Left cardiac atrium (tissue), 4 donors: ENCODE measurements at regions of chr1 and their contacts with region 1.

Region 1: GRCh38 chr1:67853704-67854103 is 20.4 kb upstream of the GNG12 start:
- DNase-seq: peak; percentile 57
- ATAC-seq: peak; percentile 65 to 82

Region 2: GRCh38 chr1:67766141-67766978 is 87.3 kb before region 1 on chr1:
- intact Hi-C with region 1: loop called in 1 of 2 experiments (anchors 5 kb)
- DNase-seq: peak; percentile 46
- ATAC-seq: peak; percentile 72 to 92

Region 3: DNA sequence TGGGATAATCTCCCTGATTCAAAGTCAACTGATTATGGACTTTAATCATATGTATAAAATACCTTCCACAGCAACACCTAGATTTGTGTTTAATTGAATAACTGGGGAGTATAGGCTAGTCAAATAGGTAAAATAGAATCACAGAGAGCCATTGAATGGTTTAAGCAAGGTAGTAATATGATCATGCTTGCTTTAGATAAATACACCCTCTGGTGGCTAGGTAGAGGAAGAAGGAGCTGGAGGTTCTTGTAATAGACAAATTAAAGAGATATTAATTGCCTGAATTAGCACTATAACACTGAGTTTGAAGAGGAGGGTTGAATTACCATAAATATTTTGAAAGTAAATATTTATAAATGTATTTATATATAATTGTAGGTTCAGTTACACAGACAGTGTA is 156.4 kb after region 1 on chr1:
- intact Hi-C with region 1: loop called (anchors 5 to 10 kb)
- DNase-seq: no peak
- ATAC-seq: peak; percentile 38 to 46

Region 4: GRCh38 chr1:68103884-68104554 is 250.3 kb after region 1 on chr1:
- intact Hi-C with region 1: loop called in 1 of 2 experiments (anchors 10 kb)
- DNase-seq: no peak
- ATAC-seq: peak in 1 of 2 donors; percentile 30

Region 5: DNA sequence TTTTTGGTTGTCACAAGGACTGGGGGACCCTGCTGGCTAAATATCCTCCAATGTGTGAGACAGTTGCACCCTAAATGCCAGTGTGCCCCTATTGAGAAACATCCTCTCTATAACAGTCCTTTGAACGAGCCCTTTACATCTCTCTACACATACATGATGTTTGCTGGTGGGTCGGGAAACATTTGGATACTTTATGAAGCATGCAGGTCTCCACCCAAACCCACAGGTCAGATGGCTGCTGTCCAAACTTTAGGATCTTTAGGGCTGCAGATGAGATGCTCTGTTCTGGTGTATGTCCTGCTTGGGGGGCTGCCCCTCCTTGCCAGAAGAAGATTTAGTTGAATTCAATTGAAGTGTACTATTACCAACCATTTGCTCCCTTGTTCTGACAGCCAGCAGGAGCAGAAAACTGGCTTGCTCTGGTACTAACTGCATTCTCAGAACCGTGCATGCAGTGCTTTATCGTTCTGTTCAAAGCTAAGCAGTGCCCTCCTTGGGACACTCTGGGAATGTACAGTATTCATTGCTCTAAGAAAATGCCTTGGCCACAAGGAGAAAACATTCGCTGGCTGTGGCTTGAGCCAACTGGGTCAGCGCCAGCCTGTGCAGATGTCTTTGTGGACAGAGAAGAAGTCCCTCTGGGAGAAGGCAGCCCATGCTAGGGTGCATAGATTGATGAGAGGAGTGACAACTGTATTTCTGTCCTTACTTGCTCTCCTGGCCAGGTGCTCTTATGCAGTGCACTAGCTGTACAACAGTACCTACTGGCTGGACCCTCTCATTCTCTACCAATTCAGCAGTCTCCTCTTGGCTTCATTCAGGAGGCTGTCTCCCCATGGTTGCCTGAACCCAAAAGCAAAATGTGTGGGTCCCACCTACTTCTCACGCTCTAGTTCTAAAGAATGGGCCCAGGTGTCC is 258.1 kb after region 1 on chr1:
- intact Hi-C with region 1: loop called (anchors 2 to 10 kb)
- DNase-seq: peak; percentile 52
- ATAC-seq: peak; percentile 84 to 94

Region 6: GRCh38 chr1:68346188-68346808 is 492.6 kb after region 1 on chr1:
- intact Hi-C with region 1: loop called (anchors 5 to 10 kb)
- DNase-seq: no peak
- ATAC-seq: no peak